IMR-90 (cell line): ENCODE measurements at regions of chr22 and their contacts with region 1.

Region 1: GRCh38 chr22:23385291-23386244 is 194.5 kb downstream of the IGLL1 start:
- DNase-seq: peak; percentile 71
- ATAC-seq: peak; percentile 98
- H3K4me3 ChIP-seq: no peak overlapping the region
- H3K27ac ChIP-seq: no peak overlapping the region
- H3K4me1 ChIP-seq: no peaks in the 10 kb centered on the region
- H3K27me3 ChIP-seq: peaks cover 3% of the 10 kb centered on the region; the same call in 1 of the 2 replicates
- CTCF ChIP-seq: peak; percentile 96
- POLR2A ChIP-seq: no peak
- RAD21 ChIP-seq: peak; percentile 93

Region 2: GRCh38 chr22:23315341-23315917 is 70.1 kb before region 1 on chr22:
- CTCF ChIA-PET with region 1: no interaction called
- POLR2A ChIA-PET with region 1: no interaction called
- dilution Hi-C with region 1: no loop called
- in situ Hi-C with region 1: no loop called
- intact Hi-C with region 1: loop called (anchors 1 kb)
- DNase-seq: peak; percentile 86
- ATAC-seq: peak; percentile 74
- H3K4me3 ChIP-seq: no peak overlapping the region
- H3K27ac ChIP-seq: no peak overlapping the region
- H3K4me1 ChIP-seq: peaks cover 4% of the 10 kb centered on the region; the same call in 1 of the 2 replicates
- H3K27me3 ChIP-seq: no peaks in the 10 kb centered on the region
- CTCF ChIP-seq: peak; percentile 76
- POLR2A ChIP-seq: no peak
- RAD21 ChIP-seq: peak; percentile 82

Region 3: DNA sequence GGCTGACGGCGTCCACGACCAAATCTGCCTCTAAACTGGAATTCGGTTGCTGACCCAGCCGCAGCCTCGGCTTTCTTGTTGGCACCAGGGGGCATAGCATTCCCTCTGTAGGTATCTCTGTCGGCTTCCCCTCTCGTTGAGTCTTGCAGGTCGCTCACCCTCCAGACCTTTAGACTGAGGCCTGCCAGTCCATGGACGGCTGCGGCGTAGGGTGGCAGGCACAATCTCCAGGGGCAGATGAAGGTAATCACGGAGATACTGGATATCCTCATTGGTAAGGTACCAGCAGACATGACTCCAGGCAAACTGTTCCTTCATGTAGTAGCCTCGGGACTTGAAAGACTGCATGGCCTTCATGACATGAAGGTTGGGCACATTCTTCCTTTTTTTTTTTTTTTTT is 63.0 kb before region 1 on chr22:
- CTCF ChIA-PET with region 1: interaction called, 4 read pairs
- POLR2A ChIA-PET with region 1: no interaction called
- dilution Hi-C with region 1: no loop called
- in situ Hi-C with region 1: no loop called
- intact Hi-C with region 1: loop called (anchors 2 kb)
- DNase-seq: no peak
- ATAC-seq: no peak
- H3K4me3 ChIP-seq: no peak overlapping the region
- H3K27ac ChIP-seq: no peak overlapping the region
- H3K4me1 ChIP-seq: no peaks in the 10 kb centered on the region
- H3K27me3 ChIP-seq: peaks cover 3% of the 10 kb centered on the region; the same call in 1 of the 2 replicates
- CTCF ChIP-seq: no peak
- POLR2A ChIP-seq: no peak
- RAD21 ChIP-seq: no peak

Region 4: DNA sequence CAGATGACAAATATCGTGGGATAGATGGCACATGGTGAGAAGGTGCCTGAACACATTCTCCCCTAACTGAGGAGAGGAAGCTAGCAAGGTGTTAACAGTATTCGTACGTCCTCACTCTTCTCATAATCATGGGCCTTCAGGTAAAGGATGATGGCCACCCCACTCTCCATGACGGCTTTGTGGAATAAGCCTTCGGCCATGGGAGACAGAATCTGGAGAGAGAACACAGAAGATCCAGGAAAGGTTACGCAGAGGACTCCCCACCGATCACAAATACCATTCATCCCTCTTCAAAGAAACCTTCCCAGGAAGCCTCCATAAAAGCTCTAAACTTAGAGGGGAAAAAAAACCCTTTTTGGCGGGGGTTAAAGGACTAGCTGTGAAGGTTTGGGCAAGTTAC is 15.3 kb before region 1 on chr22:
- CTCF ChIA-PET with region 1: interaction called, 13 read pairs
- POLR2A ChIA-PET with region 1: no interaction called
- dilution Hi-C with region 1: no loop called
- in situ Hi-C with region 1: no loop called
- intact Hi-C with region 1: no loop called
- DNase-seq: no peak
- ATAC-seq: no peak
- H3K4me3 ChIP-seq: no peak overlapping the region
- H3K27ac ChIP-seq: no peak overlapping the region
- H3K4me1 ChIP-seq: no peaks in the 10 kb centered on the region
- H3K27me3 ChIP-seq: peaks cover 32% of the 10 kb centered on the region
- CTCF ChIP-seq: no peak
- POLR2A ChIP-seq: no peak
- RAD21 ChIP-seq: no peak

Region 5: GRCh38 chr22:23446796-23447350 is 61.3 kb after region 1 on chr22:
- CTCF ChIA-PET with region 1: no interaction called
- POLR2A ChIA-PET with region 1: no interaction called
- dilution Hi-C with region 1: no loop called
- in situ Hi-C with region 1: no loop called
- intact Hi-C with region 1: no loop called
- DNase-seq: no peak
- ATAC-seq: no peak
- H3K4me3 ChIP-seq: no peak overlapping the region
- H3K27ac ChIP-seq: no peak overlapping the region
- H3K4me1 ChIP-seq: no peaks in the 10 kb centered on the region
- H3K27me3 ChIP-seq: no peaks in the 10 kb centered on the region
- CTCF ChIP-seq: no peak
- POLR2A ChIP-seq: no peak
- RAD21 ChIP-seq: no peak